ENCODE measurements at regions of chr12 and their contacts with region 1.

Region 1: GRCh38 chr12:6688999-6689882 is at the start of gene ZNF384:
- DNase-seq: peak; percentile 99 to 100 (median 99)
- H3K4me3 ChIP-seq: peak within 1 kb of the TSS; percentile 69 to 95 (median 82)
- H3K4me3 Mint-ChIP-seq: peak within 1 kb of the TSS; percentile 87 to 93
- H3K27ac ChIP-seq: peak within 1 kb of the TSS; percentile 84 to 95
- H3K27ac Mint-ChIP-seq: peak within 1 kb of the TSS; percentile 93 to 98 (median 96)
- H3K4me1 ChIP-seq: peaks cover 36 to 41% of the 10 kb centered on the region in 2 donors
- H3K4me1 Mint-ChIP-seq: peaks cover 62% of the 10 kb centered on the region
- H3K27me3 ChIP-seq: no peaks in the 10 kb centered on the region
- H3K27me3 Mint-ChIP-seq: peaks cover 3 to 6% (median 3%) of the 10 kb centered on the region in 3 donors
- CTCF ChIP-seq: no peak
- polyA plus RNA-seq, gene ZNF384: 9.6 to 87.0 (median 10.9) TPM

Region 2: GRCh38 chr12:5973461-5974130 is 715.6 kb before region 1 on chr12:
- intact Hi-C with region 1: no loop called
- DNase-seq: no peak
- H3K4me3 ChIP-seq: no peak overlapping the region
- H3K4me3 Mint-ChIP-seq: no peak overlapping the region
- H3K27ac ChIP-seq: no peak overlapping the region
- H3K27ac Mint-ChIP-seq: peak overlapping the region in 1 of 7 donors; percentile 30
- H3K4me1 ChIP-seq: no peaks in the 10 kb centered on the region
- H3K4me1 Mint-ChIP-seq: no peaks in the 10 kb centered on the region
- H3K27me3 ChIP-seq: no peaks in the 10 kb centered on the region
- H3K27me3 Mint-ChIP-seq: peaks cover 2 to 7% (median 2%) of the 10 kb centered on the region in 3 donors
- CTCF ChIP-seq: no peak

Region 3: GRCh38 chr12:6367065-6367968 is 321.9 kb before region 1 on chr12:
- intact Hi-C with region 1: no loop called
- DNase-seq: peak; percentile 72 to 85 (median 80)
- H3K4me3 ChIP-seq: peak overlapping the region in 1 of 3 experiments; percentile 44
- H3K4me3 Mint-ChIP-seq: peak overlapping the region in 1 of 2 donors; percentile 39
- H3K27ac ChIP-seq: peak overlapping the region; percentile 72 to 77
- H3K27ac Mint-ChIP-seq: peak overlapping the region; percentile 73 to 92 (median 88)
- H3K4me1 ChIP-seq: peaks cover 36 to 60% of the 10 kb centered on the region in 2 donors
- H3K4me1 Mint-ChIP-seq: peaks cover 50% of the 10 kb centered on the region
- H3K27me3 ChIP-seq: no peaks in the 10 kb centered on the region
- H3K27me3 Mint-ChIP-seq: no peaks in the 10 kb centered on the region
- CTCF ChIP-seq: peak; percentile 65

Region 4: GRCh38 chr12:6563448-6564050 is 125.7 kb before region 1 on chr12:
- intact Hi-C with region 1: loop called in 1 of 2 experiments (anchors 10 kb)
- DNase-seq: peak in 2 of 3 donors; percentile 56 to 71
- H3K4me3 ChIP-seq: no peak overlapping the region
- H3K4me3 Mint-ChIP-seq: no peak overlapping the region
- H3K27ac ChIP-seq: no peak overlapping the region
- H3K27ac Mint-ChIP-seq: peak overlapping the region in 4 of 7 donors; percentile 37 to 80 (median 52)
- H3K4me1 ChIP-seq: peaks cover 11 to 21% of the 10 kb centered on the region in 2 donors
- H3K4me1 Mint-ChIP-seq: peaks cover 22% of the 10 kb centered on the region
- H3K27me3 ChIP-seq: no peaks in the 10 kb centered on the region
- H3K27me3 Mint-ChIP-seq: peaks cover 0 to 2% (median 0%) of the 10 kb centered on the region in 3 donors
- CTCF ChIP-seq: peak; percentile 97

Region 5: GRCh38 chr12:6614513-6615172 is 74.6 kb before region 1 on chr12:
- intact Hi-C with region 1: loop called (anchors 5 kb)
- DNase-seq: no peak
- H3K4me3 ChIP-seq: peak overlapping the region in 1 of 3 experiments; percentile 32
- H3K4me3 Mint-ChIP-seq: no peak overlapping the region
- H3K27ac ChIP-seq: peak overlapping the region; percentile 51 to 72
- H3K27ac Mint-ChIP-seq: peak overlapping the region; percentile 36 to 92 (median 87)
- H3K4me1 ChIP-seq: peaks cover 44 to 49% of the 10 kb centered on the region in 2 donors
- H3K4me1 Mint-ChIP-seq: peaks cover 61% of the 10 kb centered on the region
- H3K27me3 ChIP-seq: no peaks in the 10 kb centered on the region
- H3K27me3 Mint-ChIP-seq: peaks cover 0 to 3% (median 3%) of the 10 kb centered on the region in 3 donors
- CTCF ChIP-seq: no peak

Region 6: GRCh38 chr12:6662906-6663742 is 26.1 kb before region 1 on chr12 and contains the start of gene ING4:
- intact Hi-C with region 1: loop called (anchors 1 kb)
- DNase-seq: peak; percentile 99 to 100 (median 100)
- H3K4me3 ChIP-seq: peak within 1 kb of the TSS; percentile 80 to 97 (median 88)
- H3K4me3 Mint-ChIP-seq: peak within 1 kb of the TSS; percentile 88 to 100
- H3K27ac ChIP-seq: peak within 1 kb of the TSS; percentile 34 to 93
- H3K27ac Mint-ChIP-seq: peak within 1 kb of the TSS; percentile 89 to 100 (median 98)
- H3K4me1 ChIP-seq: peaks cover 17 to 37% of the 10 kb centered on the region in 2 donors
- H3K4me1 Mint-ChIP-seq: peaks cover 34% of the 10 kb centered on the region
- H3K27me3 ChIP-seq: no peaks in the 10 kb centered on the region
- H3K27me3 Mint-ChIP-seq: peaks cover 0 to 1% (median 0%) of the 10 kb centered on the region in 3 donors
- CTCF ChIP-seq: no peak
- polyA plus RNA-seq, gene ING4: 62.2 to 67.1 (median 64.0) TPM

Measured in CD14-positive monocyte (primary cell).